Ovary (tissue), 10 donors: ENCODE measurements at regions of chr3 and their contacts with region 1.

Region 1: DNA sequence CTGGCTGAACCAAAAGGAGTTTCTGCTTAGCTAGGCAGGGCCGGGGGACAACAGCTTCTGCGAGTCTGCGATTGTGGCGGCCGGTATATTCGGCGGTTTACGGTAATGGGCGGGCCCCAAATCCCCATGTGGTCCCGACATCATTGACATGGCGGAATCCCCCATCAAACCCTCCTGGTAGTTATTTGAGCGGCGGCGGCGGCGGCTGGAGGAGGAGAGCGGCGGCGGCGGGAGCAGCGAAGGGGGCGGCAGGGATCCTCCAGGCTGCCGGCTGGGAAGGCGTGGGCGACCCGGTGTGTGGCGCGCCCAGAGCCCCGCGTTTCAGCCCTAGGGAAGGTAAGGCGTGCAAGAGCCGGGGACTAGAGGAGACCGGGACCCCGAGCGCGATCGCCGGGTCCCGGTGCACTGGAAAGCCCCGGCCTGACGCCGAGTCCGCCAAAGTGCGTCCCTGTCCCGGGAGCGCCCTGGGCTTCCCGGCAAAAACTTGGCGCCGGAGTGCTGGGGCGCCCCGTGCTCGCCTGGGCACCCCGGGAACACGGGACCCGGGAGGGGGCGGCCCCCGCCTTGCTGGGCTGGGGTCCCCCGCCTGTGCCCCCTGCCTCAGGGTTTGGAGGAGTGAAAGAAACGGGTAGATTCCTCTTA is at the start of gene FNDC3B:
- DNase-seq: peak; percentile 91 to 96 (median 94)
- H3K4me3 ChIP-seq: peak within 1 kb of the TSS; percentile 91
- H3K27ac ChIP-seq: peak within 1 kb of the TSS; percentile 97
- H3K4me1 ChIP-seq: peaks cover 7% of the 10 kb centered on the region
- H3K27me3 ChIP-seq: no peaks in the 10 kb centered on the region
- CTCF ChIP-seq: no peak
- EP300 ChIP-seq: peak; percentile 64
- POLR2A ChIP-seq: peak; percentile 88
- total RNA-seq, gene FNDC3B: 93.2 to 198 (median 110) TPM

Region 2: GRCh38 chr3:171514466-171514865 is 525.1 kb before region 1 on chr3:
- intact Hi-C with region 1: no loop called
- DNase-seq: no peak
- H3K4me3 ChIP-seq: no peak overlapping the region
- H3K27ac ChIP-seq: no peak overlapping the region
- H3K4me1 ChIP-seq: no peaks in the 10 kb centered on the region
- H3K27me3 ChIP-seq: no peaks in the 10 kb centered on the region
- CTCF ChIP-seq: no peak
- EP300 ChIP-seq: no peak
- POLR2A ChIP-seq: no peak

Region 3: DNA sequence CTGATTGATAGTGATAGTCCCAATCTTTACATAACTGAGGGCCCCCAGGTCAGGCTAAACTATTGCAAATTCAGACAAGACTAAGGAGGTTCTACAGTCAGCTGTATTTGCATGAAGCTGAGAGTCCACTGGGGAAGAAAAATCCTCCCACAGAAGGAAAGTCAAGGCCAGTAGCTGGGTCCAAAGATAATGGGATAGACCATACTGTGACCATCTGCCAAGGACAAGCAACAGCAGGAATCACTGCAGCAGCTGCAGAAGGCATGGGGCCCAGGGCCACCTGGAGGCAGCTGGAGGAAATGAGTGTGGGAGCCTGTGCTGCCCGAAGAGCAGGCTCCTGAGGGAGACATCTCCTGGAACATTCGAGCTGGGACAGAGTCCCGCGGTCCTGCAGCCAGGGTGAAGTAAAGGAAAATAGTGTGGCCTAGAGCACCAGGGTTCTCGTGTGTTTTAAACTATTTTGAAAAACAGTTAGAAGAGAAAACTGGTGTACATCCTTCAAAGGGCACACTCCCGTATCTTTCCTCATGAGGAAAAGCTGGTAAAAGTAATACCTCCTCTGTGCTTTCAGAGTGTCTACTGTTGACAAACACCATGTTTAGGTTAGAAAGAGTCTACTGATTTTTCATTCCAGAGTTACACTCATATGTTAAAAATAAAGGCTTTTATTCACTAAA is 209.6 kb before region 1 on chr3:
- intact Hi-C with region 1: loop called in 2 of 4 experiments (anchors 10 kb)
- DNase-seq: peak; percentile 87 to 91 (median 90)
- H3K4me3 ChIP-seq: no peak overlapping the region
- H3K27ac ChIP-seq: peak overlapping the region; percentile 31 to 84
- H3K4me1 ChIP-seq: peaks cover 19% of the 10 kb centered on the region
- H3K27me3 ChIP-seq: no peaks in the 10 kb centered on the region
- CTCF ChIP-seq: peak; percentile 42 to 83 (median 83)
- EP300 ChIP-seq: no peak
- POLR2A ChIP-seq: peak; percentile 23

Region 4: DNA sequence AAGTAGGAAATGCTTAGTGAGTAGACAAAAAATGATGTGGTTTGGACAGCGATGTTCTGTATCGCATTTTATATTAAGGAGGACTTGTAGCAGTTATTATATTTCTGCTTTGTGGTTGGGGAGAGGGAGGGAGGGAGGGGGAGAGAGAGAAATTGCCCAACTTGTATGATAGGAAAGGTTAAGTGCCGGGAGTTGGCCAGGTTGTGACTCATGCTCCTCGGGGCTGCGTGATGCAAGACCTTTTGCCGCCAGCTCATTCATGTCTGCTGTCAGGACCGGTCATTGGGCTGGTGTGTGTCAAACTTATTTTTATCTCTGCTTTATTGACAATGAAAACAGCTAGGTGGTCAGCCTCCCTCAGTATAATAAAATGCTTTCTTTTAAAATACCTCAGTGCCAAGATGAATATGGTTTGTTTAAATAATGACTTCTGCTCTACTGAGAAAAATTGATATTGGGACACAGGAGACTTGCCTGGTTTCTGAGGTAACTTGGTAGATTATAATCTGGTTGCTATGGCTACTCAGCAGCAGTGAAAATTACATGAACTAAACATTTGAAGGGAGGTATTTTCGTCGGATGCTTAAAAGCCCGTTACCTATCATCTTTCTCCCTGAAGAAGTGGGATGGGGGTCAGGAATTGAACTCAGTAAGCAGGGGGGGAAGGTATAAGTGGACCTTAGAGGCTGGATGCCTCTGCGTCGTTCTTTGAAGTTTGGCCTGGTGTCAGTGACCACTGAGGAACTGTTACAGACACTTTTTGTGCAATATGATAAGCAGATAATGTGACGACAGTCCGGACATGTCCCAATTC is 90.5 kb after region 1 on chr3:
- intact Hi-C with region 1: loop called in 1 of 4 experiments (anchors 10 kb)
- DNase-seq: peak; percentile 86 to 95 (median 90)
- H3K4me3 ChIP-seq: no peak overlapping the region
- H3K27ac ChIP-seq: peak overlapping the region; percentile 46 to 55
- H3K4me1 ChIP-seq: peaks cover 18% of the 10 kb centered on the region
- H3K27me3 ChIP-seq: no peaks in the 10 kb centered on the region
- CTCF ChIP-seq: no peak
- EP300 ChIP-seq: peak; percentile 87
- POLR2A ChIP-seq: no peak

Region 5: GRCh38 chr3:172201136-172201869 is 161.7 kb after region 1 on chr3:
- intact Hi-C with region 1: loop called in 1 of 4 experiments (anchors 5 kb)
- DNase-seq: peak; percentile 76 to 88 (median 83)
- H3K4me3 ChIP-seq: no peak overlapping the region
- H3K27ac ChIP-seq: peak overlapping the region in 1 of 2 donors; percentile 37
- H3K4me1 ChIP-seq: peaks cover 9% of the 10 kb centered on the region
- H3K27me3 ChIP-seq: no peaks in the 10 kb centered on the region
- CTCF ChIP-seq: no peak
- EP300 ChIP-seq: no peak
- POLR2A ChIP-seq: no peak

Region 6: GRCh38 chr3:172332256-172333041 is 292.9 kb after region 1 on chr3:
- intact Hi-C with region 1: loop called in 3 of 4 experiments (anchors 5 to 10 kb)
- DNase-seq: peak in 4 of 5 donors; percentile 49 to 81 (median 69)
- H3K4me3 ChIP-seq: no peak overlapping the region
- H3K27ac ChIP-seq: peak overlapping the region in 1 of 2 donors; percentile 26
- H3K4me1 ChIP-seq: peaks cover 3% of the 10 kb centered on the region
- H3K27me3 ChIP-seq: no peaks in the 10 kb centered on the region
- CTCF ChIP-seq: peak; percentile 67 to 88 (median 83)
- EP300 ChIP-seq: no peak
- POLR2A ChIP-seq: no peak